Activated naive CD4-positive, alpha-beta T cell treated with anti-CD3 and anti-CD28 coated beads for 36 hours (primary cell): ENCODE measurements at regions of chr19 and their contacts with region 1.

Region 1: DNA sequence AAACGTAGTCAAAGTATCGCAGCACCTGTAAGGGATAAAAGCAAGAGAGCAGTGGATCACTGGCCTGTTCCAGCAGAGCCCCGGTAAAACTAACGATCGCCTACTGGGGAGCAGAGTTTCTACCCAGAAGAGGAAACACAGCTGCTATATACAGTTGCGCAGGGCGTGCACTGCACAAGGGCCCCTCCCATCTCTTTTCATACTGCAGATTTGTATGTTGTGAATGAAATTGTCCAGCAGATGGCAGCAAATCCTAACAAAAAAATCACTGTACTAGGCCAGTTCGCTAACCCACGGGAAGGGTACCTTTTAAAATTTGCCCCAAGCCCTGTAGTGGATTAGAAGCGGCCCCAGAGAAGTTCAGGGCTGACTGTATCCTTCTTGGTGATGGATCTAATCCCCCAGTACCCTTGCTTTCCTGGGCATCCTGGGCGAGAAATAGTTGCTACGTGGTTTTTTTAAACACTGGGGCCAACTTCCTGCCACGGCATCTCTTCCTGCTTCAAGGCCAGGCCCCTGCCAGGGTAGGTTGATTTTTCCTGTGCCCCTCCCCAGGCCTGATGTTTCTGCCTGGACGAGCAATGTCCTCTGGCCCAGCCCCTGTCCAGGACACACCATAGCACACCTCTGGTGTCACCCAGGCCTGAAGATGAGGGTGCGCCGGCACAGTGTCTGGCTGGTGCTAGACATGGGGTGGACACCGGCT is 127.0 kb downstream of the IER2 start:
- DNase-seq: peak; percentile 81
- H3K4me3 Mint-ChIP-seq: peak overlapping the region; percentile 11
- H3K27ac Mint-ChIP-seq: peak overlapping the region; percentile 64
- H3K4me1 Mint-ChIP-seq: peaks cover 15% of the 10 kb centered on the region
- H3K27me3 Mint-ChIP-seq: no peaks in the 10 kb centered on the region

Region 2: DNA sequence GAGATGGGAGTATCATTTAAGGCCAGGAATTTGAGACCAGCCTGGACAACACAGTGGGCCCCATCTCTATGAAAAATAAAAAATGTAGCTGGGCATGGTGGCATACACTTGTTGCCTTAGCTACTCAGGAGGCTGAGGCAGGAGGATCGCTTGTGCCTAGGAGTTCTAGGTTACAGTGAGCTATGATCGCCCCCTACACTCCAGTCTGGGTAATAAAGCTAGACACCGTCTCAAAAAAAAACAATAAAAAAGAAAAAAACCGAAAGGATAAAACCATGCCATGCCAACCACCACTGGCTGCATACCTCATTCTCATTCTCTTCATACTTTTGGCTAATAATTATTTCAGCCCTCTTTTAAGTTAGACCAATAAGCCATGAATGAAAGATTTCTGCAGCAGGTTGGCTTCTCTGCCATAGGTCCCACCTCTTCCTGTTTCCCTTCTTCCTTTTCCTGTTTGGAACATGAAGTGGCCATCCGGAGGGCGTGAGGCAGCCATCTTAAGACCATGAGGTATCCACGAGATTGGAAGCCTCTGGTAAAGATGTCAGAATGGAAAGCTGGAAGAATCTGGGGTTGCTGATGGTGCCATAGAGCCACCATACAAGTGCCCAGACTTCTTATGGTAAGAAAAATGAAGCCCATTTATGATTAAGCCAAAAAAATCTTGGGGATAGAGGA is 57.7 kb after region 1 on chr19:
- CTCF ChIA-PET with region 1: interaction called, 10 read pairs
- intact Hi-C with region 1: loop called (anchors 5 kb)
- DNase-seq: no peak
- H3K4me3 Mint-ChIP-seq: no peak overlapping the region
- H3K27ac Mint-ChIP-seq: no peak overlapping the region
- H3K4me1 Mint-ChIP-seq: no peaks in the 10 kb centered on the region
- H3K27me3 Mint-ChIP-seq: peaks cover 7% of the 10 kb centered on the region

Region 3: GRCh38 chr19:13430790-13431582 is 153.7 kb after region 1 on chr19:
- CTCF ChIA-PET with region 1: interaction called, 15 read pairs
- intact Hi-C with region 1: loop called (anchors 1 kb)
- DNase-seq: peak; percentile 77
- H3K4me3 Mint-ChIP-seq: no peak overlapping the region
- H3K27ac Mint-ChIP-seq: no peak overlapping the region
- H3K4me1 Mint-ChIP-seq: no peaks in the 10 kb centered on the region
- H3K27me3 Mint-ChIP-seq: peaks cover 21% of the 10 kb centered on the region

Region 4: GRCh38 chr19:13588957-13589833 is 311.9 kb after region 1 on chr19:
- CTCF ChIA-PET with region 1: interaction called, 60 read pairs
- intact Hi-C with region 1: loop called (anchors 1 kb)
- DNase-seq: peak; percentile 86
- H3K4me3 Mint-ChIP-seq: no peak overlapping the region
- H3K27ac Mint-ChIP-seq: no peak overlapping the region
- H3K4me1 Mint-ChIP-seq: no peaks in the 10 kb centered on the region
- H3K27me3 Mint-ChIP-seq: peaks cover 2% of the 10 kb centered on the region

Region 5: GRCh38 chr19:13718733-13719132 is 441.5 kb after region 1 on chr19:
- CTCF ChIA-PET with region 1: no interaction called
- intact Hi-C with region 1: loop called (anchors 1 kb)
- DNase-seq: no peak
- H3K4me3 Mint-ChIP-seq: no peak overlapping the region
- H3K27ac Mint-ChIP-seq: no peak overlapping the region
- H3K4me1 Mint-ChIP-seq: peaks cover 2% of the 10 kb centered on the region
- H3K27me3 Mint-ChIP-seq: peaks cover 13% of the 10 kb centered on the region